ENCODE measurements at regions of chr5 and their contacts with region 1.

Region 1: GRCh38 chr5:141564216-141564692 is 54.5 kb downstream of the DIAPH1 start:
- DNase-seq: peak; percentile 50 to 95
- ATAC-seq: peak; percentile 76 to 93
- H3K4me3 ChIP-seq: no peak overlapping the region
- H3K27ac ChIP-seq: no peak overlapping the region
- H3K4me1 ChIP-seq: no peaks in the 10 kb centered on the region
- CTCF ChIP-seq: peak; percentile 94
- EP300 ChIP-seq: no peak
- POLR2A ChIP-seq: no peak
- RAD21 ChIP-seq: peak; percentile 55 to 69; a peak in 4 of 5 replicates

Region 2: GRCh38 chr5:141320225-141321169 is 243.8 kb before region 1 on chr5 and contains the start of gene TAF7:
- CTCF ChIA-PET with region 1: interaction called, 14 read pairs
- POLR2A ChIA-PET with region 1: interaction called, 8 read pairs
- DNase-seq: peak; percentile 75 to 96
- ATAC-seq: peak; percentile 97 to 98
- H3K4me3 ChIP-seq: peak within 1 kb of the TSS; percentile 68
- H3K27ac ChIP-seq: peak within 1 kb of the TSS; percentile 84 to 93
- H3K4me1 ChIP-seq: no peaks in the 10 kb centered on the region
- CTCF ChIP-seq: peak; percentile 78
- EP300 ChIP-seq: no peak
- POLR2A ChIP-seq: peak; percentile 79
- RAD21 ChIP-seq: no peak; a peak in 1 of 5 replicates
- polyA plus RNA-seq, gene TAF7: 78.1 and 90.6 TPM in 2 replicates

Region 3: GRCh38 chr5:141349917-141350619 is 214.2 kb before region 1 on chr5 and contains the start of gene PCDHGB1:
- CTCF ChIA-PET with region 1: interaction called, 25 read pairs
- POLR2A ChIA-PET with region 1: interaction called, 4 read pairs
- DNase-seq: peak; percentile 80 to 87
- ATAC-seq: peak; percentile 99
- H3K4me3 ChIP-seq: peak within 1 kb of the TSS; percentile 45
- H3K27ac ChIP-seq: peak within 1 kb of the TSS; percentile 24 to 73; a peak in 5 of 6 replicates
- H3K4me1 ChIP-seq: no peaks in the 10 kb centered on the region
- CTCF ChIP-seq: peak; percentile 75
- EP300 ChIP-seq: no peak
- POLR2A ChIP-seq: peak; percentile 28
- RAD21 ChIP-seq: peak; percentile 71 to 73
- polyA plus RNA-seq, gene PCDHGB1: 3.7 and 3.9 TPM in 2 replicates

Region 4: DNA sequence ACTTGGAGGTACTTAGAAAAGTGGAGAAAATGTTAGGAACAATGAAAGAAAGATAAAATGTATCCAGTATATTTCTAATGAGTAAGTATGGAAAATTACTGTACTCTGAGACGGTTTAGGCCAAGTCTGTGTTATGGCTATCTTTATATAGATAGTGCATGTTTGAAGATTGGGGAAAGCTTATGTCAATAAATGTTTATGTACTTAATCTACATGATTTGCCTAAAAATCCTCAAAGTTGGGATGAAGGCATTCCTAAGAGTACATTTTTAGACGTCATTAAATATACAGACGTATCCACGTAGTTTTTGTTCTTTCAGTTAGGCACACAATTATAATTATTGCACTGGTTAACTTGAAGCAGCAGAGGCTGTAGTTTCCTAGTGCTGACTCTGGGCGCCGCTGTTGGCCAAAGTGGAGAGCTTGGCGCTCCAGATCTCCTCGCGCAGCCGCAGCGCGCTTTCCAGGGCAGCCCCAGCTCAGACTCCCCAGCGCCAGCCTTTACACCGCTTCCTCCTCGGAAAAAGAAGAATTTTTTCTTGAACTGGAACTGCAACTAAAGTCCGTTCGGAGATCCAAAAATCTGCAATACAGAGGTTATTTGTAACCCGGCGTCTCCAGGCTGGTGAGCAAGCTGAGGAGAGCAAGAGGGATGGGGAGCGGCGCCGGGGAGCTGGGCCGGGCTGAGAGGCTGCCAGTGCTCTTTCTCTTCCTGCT is 176.9 kb before region 1 on chr5 and contains the start of gene PCDHGB4:
- CTCF ChIA-PET with region 1: interaction called, 19 read pairs
- POLR2A ChIA-PET with region 1: interaction called, 3 read pairs
- DNase-seq: peak in 1 of 2 experiments; percentile 42
- ATAC-seq: peak; percentile 63 to 64
- H3K4me3 ChIP-seq: no peak within 1 kb of the TSS
- H3K27ac ChIP-seq: no peak within 1 kb of the TSS
- H3K4me1 ChIP-seq: no peaks in the 10 kb centered on the region
- CTCF ChIP-seq: peak; percentile 13; the same call in 1 of the 3 replicates
- EP300 ChIP-seq: no peak
- POLR2A ChIP-seq: no peak
- RAD21 ChIP-seq: peak; percentile 26 to 31; a peak in 2 of 5 replicates
- polyA plus RNA-seq, gene PCDHGB4: 1.4 and 1.5 TPM in 2 replicates

Region 5: GRCh38 chr5:141465351-141465750 is 98.9 kb before region 1 on chr5:
- CTCF ChIA-PET with region 1: no interaction called
- POLR2A ChIA-PET with region 1: no interaction called
- DNase-seq: no peak
- ATAC-seq: no peak
- H3K4me3 ChIP-seq: no peak overlapping the region
- H3K27ac ChIP-seq: no peak overlapping the region
- H3K4me1 ChIP-seq: no peaks in the 10 kb centered on the region
- CTCF ChIP-seq: no peak
- EP300 ChIP-seq: no peak
- POLR2A ChIP-seq: no peak
- RAD21 ChIP-seq: no peak

Region 6: GRCh38 chr5:141524604-141525597 is 39.4 kb before region 1 on chr5:
- CTCF ChIA-PET with region 1: interaction called, 30 read pairs
- POLR2A ChIA-PET with region 1: no interaction called
- DNase-seq: peak; percentile 89 to 92
- ATAC-seq: peak; percentile 92 to 95
- H3K4me3 ChIP-seq: no peak overlapping the region
- H3K27ac ChIP-seq: no peak overlapping the region
- H3K4me1 ChIP-seq: peaks cover 36% of the 10 kb centered on the region
- CTCF ChIP-seq: peak; percentile 99
- EP300 ChIP-seq: no peak
- POLR2A ChIP-seq: no peak
- RAD21 ChIP-seq: peak; percentile 82 to 84

Region 7: GRCh38 chr5:141618804-141619554 is 54.7 kb after region 1 on chr5 and contains the start of gene DIAPH1:
- CTCF ChIA-PET with region 1: interaction called, 11 read pairs
- POLR2A ChIA-PET with region 1: no interaction called
- DNase-seq: peak; percentile 85 to 97
- ATAC-seq: peak; percentile 95
- H3K4me3 ChIP-seq: peak within 1 kb of the TSS; percentile 99
- H3K27ac ChIP-seq: peak within 1 kb of the TSS; percentile 95 to 98
- H3K4me1 ChIP-seq: peaks cover 18% of the 10 kb centered on the region
- CTCF ChIP-seq: peak; percentile 97
- EP300 ChIP-seq: no peak; a peak in 1 of 5 replicates
- POLR2A ChIP-seq: peak; percentile 74
- RAD21 ChIP-seq: peak; percentile 76 to 92
- polyA plus RNA-seq, gene DIAPH1: 53.4 and 82.2 TPM in 2 replicates